Lower lobe of right lung (tissue), 2 donors: ENCODE measurements at regions of chr9 and their contacts with region 1.

Region 1: DNA sequence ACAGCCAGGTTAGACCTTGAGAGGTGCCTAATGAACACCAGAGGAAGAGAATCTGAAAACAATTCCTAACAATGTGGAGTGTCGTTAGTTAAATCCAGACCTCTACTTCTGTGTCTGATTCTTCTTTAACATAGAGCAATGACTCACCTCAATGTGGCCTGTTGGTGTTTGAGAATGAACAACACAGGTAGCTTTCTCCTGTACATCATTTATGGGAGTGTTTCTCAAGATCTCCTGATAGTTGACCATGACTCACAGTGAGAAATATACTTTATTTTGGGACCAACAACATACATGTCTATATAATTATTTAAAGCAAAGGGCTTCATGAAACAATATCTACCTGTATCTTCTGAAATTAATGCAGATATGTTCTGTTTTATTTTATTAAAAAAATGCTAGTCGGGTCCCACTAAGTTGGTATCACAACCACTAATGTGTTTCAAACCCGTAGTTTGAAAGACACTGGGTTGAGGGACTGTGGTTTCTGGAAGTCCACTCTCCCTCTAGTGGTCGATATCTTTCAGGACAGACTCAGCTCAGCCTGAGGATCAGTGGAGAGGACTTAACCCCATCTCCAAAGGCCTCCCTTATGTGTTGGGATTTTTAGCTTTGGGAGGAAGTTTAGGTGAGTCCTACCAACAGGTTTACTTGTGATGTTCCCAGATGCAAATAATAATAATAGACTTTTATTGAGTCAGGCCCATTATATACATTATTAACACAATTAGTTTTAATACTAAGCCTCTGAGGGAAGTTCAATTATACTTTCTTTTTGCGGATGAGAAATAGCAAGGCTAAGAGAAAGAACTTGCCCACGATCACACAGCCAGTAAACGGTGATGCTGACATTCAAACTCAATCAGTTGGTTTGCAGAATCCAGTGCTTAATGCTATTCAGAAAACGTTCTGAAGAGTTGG is 70.0 kb upstream of the KLF9 start:
- DNase-seq: no peak
- ATAC-seq: peak; percentile 75 to 80
- H3K4me3 ChIP-seq: no peak overlapping the region
- H3K27ac ChIP-seq: peak overlapping the region; percentile 51
- H3K4me1 ChIP-seq: peaks cover 73% of the 10 kb centered on the region
- H3K27me3 ChIP-seq: no peaks in the 10 kb centered on the region
- CTCF ChIP-seq: peak; percentile 83

Region 2: GRCh38 chr9:70111042-70111602 is 373.3 kb before region 1 on chr9:
- intact Hi-C with region 1: no loop called
- DNase-seq: peak; percentile 85
- ATAC-seq: peak; percentile 77 to 80
- H3K4me3 ChIP-seq: no peak overlapping the region
- H3K27ac ChIP-seq: no peak overlapping the region
- H3K4me1 ChIP-seq: peaks cover 13% of the 10 kb centered on the region
- H3K27me3 ChIP-seq: no peaks in the 10 kb centered on the region
- CTCF ChIP-seq: peak; percentile 91

Region 3: GRCh38 chr9:70413798-70414775 is 70.4 kb before region 1 on chr9 and contains the start of gene KLF9:
- intact Hi-C with region 1: loop called (anchors 10 kb)
- DNase-seq: peak; percentile 94
- ATAC-seq: peak; percentile 82 to 89
- H3K4me3 ChIP-seq: peak within 1 kb of the TSS; percentile 75
- H3K27ac ChIP-seq: peak within 1 kb of the TSS; percentile 100
- H3K4me1 ChIP-seq: peaks cover 59% of the 10 kb centered on the region
- H3K27me3 ChIP-seq: no peaks in the 10 kb centered on the region
- CTCF ChIP-seq: no peak
- total RNA-seq, gene KLF9: 76.9 TPM

Region 4: GRCh38 chr9:70427161-70427945 is 57.1 kb before region 1 on chr9:
- intact Hi-C with region 1: no loop called
- DNase-seq: no peak
- ATAC-seq: peak; percentile 63 to 64
- H3K4me3 ChIP-seq: no peak overlapping the region
- H3K27ac ChIP-seq: no peak overlapping the region
- H3K4me1 ChIP-seq: peaks cover 5% of the 10 kb centered on the region
- H3K27me3 ChIP-seq: no peaks in the 10 kb centered on the region
- CTCF ChIP-seq: no peak